HepG2 (cell line): ENCODE measurements at regions of chr19 and their contacts with region 1.

Region 1: GRCh38 chr19:3075895-3076431 is 13.7 kb upstream of the TLE5 start:
- DNase-seq: no peak
- ATAC-seq: peak; percentile 77
- H3K4me3 ChIP-seq: peak overlapping the region in 1 of 3 experiments; percentile 44; a peak in 1 of 6 replicates
- H3K27ac ChIP-seq: no peak overlapping the region
- H3K4me1 ChIP-seq: peaks cover 20% of the 10 kb centered on the region
- H3K27me3 ChIP-seq: peaks cover 0 to 4% of the 10 kb centered on the region in 2 experiments; a peak in 1 of 5 replicates
- CTCF ChIP-seq: peak; percentile 94
- EP300 ChIP-seq: no peak
- POLR2A ChIP-seq: no peak
- RAD21 ChIP-seq: peak; percentile 95

Region 2: GRCh38 chr19:3102228-3103140 is 26.5 kb after region 1 on chr19:
- CTCF ChIA-PET with region 1: interaction called, 34 read pairs
- POLR2A ChIA-PET with region 1: interaction called, 7 read pairs
- in situ Hi-C with region 1: no loop called
- intact Hi-C with region 1: no loop called
- DNase-seq: no peak
- ATAC-seq: no peak
- H3K4me3 ChIP-seq: no peak overlapping the region
- H3K27ac ChIP-seq: no peak overlapping the region
- H3K4me1 ChIP-seq: peaks cover 54% of the 10 kb centered on the region
- H3K27me3 ChIP-seq: no peaks in the 10 kb centered on the region
- CTCF ChIP-seq: no peak
- EP300 ChIP-seq: no peak
- POLR2A ChIP-seq: no peak
- RAD21 ChIP-seq: no peak; the same call in 1 of the 2 replicates

Region 3: DNA sequence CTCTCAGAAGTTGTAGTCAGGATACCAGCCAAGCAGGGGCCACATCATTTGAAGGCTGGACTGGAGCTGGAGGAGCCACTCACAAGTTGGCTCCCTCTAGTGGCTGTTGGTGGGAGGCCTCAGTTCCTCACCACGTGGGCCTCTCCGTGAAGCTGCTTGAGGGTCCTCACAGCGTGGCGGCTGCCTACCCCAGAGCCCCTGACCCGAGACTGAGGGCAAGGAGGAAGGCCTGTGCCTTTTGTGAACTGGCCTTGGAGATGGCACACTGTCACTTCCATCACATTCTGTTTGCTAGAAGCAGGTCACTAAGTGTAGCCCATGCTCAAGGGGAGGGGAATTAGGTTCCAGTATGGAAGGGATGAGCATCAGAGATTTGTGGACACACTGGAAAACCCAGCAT is 32.8 kb after region 1 on chr19:
- CTCF ChIA-PET with region 1: interaction called, 34 read pairs
- POLR2A ChIA-PET with region 1: interaction called, 7 read pairs
- in situ Hi-C with region 1: no loop called
- intact Hi-C with region 1: no loop called
- DNase-seq: peak; percentile 52
- ATAC-seq: peak; percentile 65
- H3K4me3 ChIP-seq: no peak overlapping the region
- H3K27ac ChIP-seq: no peak overlapping the region
- H3K4me1 ChIP-seq: peaks cover 26% of the 10 kb centered on the region
- H3K27me3 ChIP-seq: no peaks in the 10 kb centered on the region
- CTCF ChIP-seq: peak; percentile 86
- EP300 ChIP-seq: no peak
- POLR2A ChIP-seq: no peak
- RAD21 ChIP-seq: peak; percentile 66

Region 4: DNA sequence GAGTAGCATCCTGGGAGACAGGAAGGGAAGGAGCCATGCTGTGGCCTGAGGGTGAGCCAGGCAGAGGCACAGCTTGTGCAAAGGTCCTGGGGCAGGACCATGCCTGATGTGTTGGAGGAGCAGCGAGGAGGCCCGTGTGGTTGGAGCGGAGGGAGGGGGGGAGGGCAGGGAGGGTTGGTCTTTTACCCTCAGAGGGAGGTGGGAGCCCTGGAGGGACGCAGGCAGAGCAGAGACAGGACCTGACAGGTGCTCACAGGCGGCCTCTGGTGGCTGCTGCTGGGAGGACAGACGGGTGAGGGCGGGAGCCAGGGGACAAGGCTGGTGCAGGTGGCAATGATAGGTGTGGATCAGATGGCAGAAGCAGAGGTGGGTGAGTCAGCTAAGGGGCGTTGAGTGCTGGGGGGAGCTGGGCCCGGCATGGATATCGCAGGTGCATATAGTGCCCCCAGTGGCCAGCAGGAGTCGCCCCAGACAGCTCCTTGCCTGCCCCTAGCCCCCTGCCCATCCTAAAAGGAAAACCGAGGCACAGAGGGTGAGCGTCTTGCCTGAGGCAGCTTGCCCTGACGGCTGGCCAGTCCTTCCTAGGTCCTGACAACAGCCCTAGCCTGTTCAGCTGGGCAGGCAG is 50.0 kb after region 1 on chr19:
- CTCF ChIA-PET with region 1: interaction called, 3 read pairs
- POLR2A ChIA-PET with region 1: no interaction called
- in situ Hi-C with region 1: loop called (anchors 10 kb)
- intact Hi-C with region 1: no loop called
- DNase-seq: peak; percentile 43
- ATAC-seq: peak; percentile 86
- H3K4me3 ChIP-seq: no peak overlapping the region
- H3K27ac ChIP-seq: no peak overlapping the region
- H3K4me1 ChIP-seq: no peaks in the 10 kb centered on the region
- H3K27me3 ChIP-seq: no peaks in the 10 kb centered on the region
- CTCF ChIP-seq: peak; percentile 95
- EP300 ChIP-seq: no peak
- POLR2A ChIP-seq: no peak
- RAD21 ChIP-seq: peak; percentile 33; the same call in 1 of the 2 replicates

Region 5: DNA sequence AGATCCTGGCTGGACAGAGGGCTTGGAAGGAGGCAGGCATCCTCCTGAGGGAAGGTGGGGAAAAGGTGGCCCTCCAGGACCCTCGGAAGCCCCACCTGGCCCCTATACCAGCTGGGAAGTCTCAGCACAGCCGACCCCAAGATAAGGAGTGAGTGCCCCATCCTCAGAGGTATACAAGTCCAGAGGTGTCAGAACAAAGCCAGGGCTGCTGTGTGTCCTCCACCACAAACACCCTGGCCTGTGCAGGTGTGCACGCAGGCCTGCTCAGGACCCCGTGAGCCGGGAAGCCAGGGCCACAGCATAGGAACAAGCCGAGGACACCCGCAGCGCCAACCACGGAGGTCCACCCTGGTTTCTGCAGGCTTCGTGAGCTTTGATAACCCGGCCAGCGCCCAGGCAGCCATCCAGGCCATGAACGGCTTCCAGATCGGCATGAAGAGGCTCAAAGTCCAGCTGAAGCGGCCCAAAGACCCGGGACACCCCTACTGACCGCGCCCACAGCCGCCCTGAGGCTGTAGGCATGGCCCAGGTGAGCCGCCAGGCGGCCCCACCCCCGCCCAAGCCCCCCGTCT is 217.1 kb after region 1 on chr19:
- CTCF ChIA-PET with region 1: no interaction called
- POLR2A ChIA-PET with region 1: no interaction called
- in situ Hi-C with region 1: no loop called
- intact Hi-C with region 1: no loop called
- DNase-seq: peak; percentile 39
- ATAC-seq: peak; percentile 76
- H3K4me3 ChIP-seq: peak overlapping the region in 1 of 3 experiments; percentile 27; a peak in 1 of 6 replicates
- H3K27ac ChIP-seq: no peak overlapping the region
- H3K4me1 ChIP-seq: peaks cover 36% of the 10 kb centered on the region
- H3K27me3 ChIP-seq: peaks cover 3 to 26% of the 10 kb centered on the region in 2 experiments; a peak in 4 of 5 replicates
- CTCF ChIP-seq: 0 out of 2 replicates have a peak, but pooled peaks have one; percentile 8
- EP300 ChIP-seq: no peak
- POLR2A ChIP-seq: no peak
- RAD21 ChIP-seq: no peak